IMR-90 (cell line): ENCODE measurements at regions of chr7 and their contacts with region 1.

Region 1: GRCh38 chr7:117212969-117213877 is 109.6 kb downstream of the WNT2 start:
- DNase-seq: peak; percentile 75
- ATAC-seq: peak; percentile 84
- H3K4me3 ChIP-seq: no peak overlapping the region
- H3K27ac ChIP-seq: peak overlapping the region; percentile 60; the same call in 1 of the 2 replicates
- H3K4me1 ChIP-seq: peaks cover 5% of the 10 kb centered on the region
- H3K27me3 ChIP-seq: no peaks in the 10 kb centered on the region
- CTCF ChIP-seq: peak; percentile 91
- POLR2A ChIP-seq: no peak
- RAD21 ChIP-seq: peak; percentile 88

Region 2: GRCh38 chr7:117134889-117135552 is 78.2 kb before region 1 on chr7:
- CTCF ChIA-PET with region 1: no interaction called
- POLR2A ChIA-PET with region 1: no interaction called
- dilution Hi-C with region 1: no loop called
- in situ Hi-C with region 1: no loop called
- intact Hi-C with region 1: loop called (anchors 5 kb)
- DNase-seq: peak; percentile 57
- ATAC-seq: peak; percentile 46
- H3K4me3 ChIP-seq: no peak overlapping the region
- H3K27ac ChIP-seq: no peak overlapping the region
- H3K4me1 ChIP-seq: peaks cover 9% of the 10 kb centered on the region
- H3K27me3 ChIP-seq: no peaks in the 10 kb centered on the region
- CTCF ChIP-seq: no peak
- POLR2A ChIP-seq: no peak
- RAD21 ChIP-seq: no peak

Region 3: DNA sequence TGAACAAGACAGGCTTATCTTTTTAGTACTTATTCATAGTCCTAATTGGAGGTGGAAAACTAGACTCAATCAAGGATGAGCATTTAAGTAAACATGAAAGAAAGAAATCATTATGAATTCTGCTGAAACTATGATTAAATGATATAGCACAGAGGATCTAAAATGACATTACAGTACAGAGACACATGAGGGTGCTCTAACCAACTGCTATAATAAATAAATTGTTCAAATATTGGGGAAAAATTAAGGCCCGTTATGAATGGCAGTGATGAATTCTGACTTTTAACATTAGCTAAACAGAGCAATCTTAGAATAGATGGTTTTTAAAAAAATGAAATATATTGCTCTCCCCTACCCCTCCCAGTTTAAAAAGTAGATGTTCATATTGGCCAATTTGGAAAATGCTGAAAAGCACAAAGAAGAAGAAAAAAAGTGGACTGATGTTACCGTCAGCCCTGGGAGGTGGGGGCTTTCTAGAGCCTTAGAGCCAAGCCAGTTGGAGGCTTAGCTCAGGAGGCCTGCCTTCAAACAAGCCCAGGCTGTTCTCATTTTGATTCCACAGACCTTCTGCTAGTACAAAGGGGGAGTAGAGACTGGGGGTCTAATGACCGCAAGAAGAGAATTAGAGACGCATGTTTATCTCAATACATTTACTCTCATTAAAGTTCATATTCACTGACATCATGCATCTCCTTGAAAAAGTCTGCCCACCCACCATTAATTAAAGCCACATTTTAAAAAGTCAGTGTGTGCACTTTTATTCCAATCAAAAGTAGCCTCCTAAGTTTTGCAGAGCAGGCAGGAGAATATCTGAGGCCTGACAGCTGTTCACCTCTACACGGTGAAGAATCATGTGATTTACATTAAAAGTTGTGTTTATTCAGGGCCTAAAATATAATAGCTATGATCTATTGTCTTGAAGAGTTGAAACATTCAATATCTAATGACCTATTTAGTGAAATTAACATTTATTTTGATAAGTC is 99.7 kb after region 1 on chr7:
- CTCF ChIA-PET with region 1: no interaction called
- POLR2A ChIA-PET with region 1: no interaction called
- dilution Hi-C with region 1: no loop called
- in situ Hi-C with region 1: no loop called
- intact Hi-C with region 1: loop called (anchors 5 kb)
- DNase-seq: peak; percentile 13
- ATAC-seq: peak; percentile 72
- H3K4me3 ChIP-seq: no peak overlapping the region
- H3K27ac ChIP-seq: peak overlapping the region; percentile 62; the same call in 1 of the 2 replicates
- H3K4me1 ChIP-seq: peaks cover 2% of the 10 kb centered on the region; the same call in 1 of the 2 replicates
- H3K27me3 ChIP-seq: no peaks in the 10 kb centered on the region
- CTCF ChIP-seq: peak; percentile 48
- POLR2A ChIP-seq: no peak
- RAD21 ChIP-seq: peak; percentile 47